ENCODE measurements at regions of chr14 and their contacts with region 1.

Region 1: GRCh38 chr14:93033983-93034670 is 81.6 kb downstream of the ITPK1 start:
- DNase-seq: no peak
- H3K4me3 ChIP-seq: peak overlapping the region in 1 of 3 experiments; percentile 54
- H3K4me3 Mint-ChIP-seq: no peak overlapping the region
- H3K27ac ChIP-seq: peak overlapping the region; percentile 67 to 85
- H3K27ac Mint-ChIP-seq: peak overlapping the region; percentile 16 to 95 (median 92)
- H3K4me1 ChIP-seq: peaks cover 57 to 58% of the 10 kb centered on the region in 2 donors
- H3K4me1 Mint-ChIP-seq: peaks cover 66% of the 10 kb centered on the region
- H3K27me3 ChIP-seq: no peaks in the 10 kb centered on the region
- H3K27me3 Mint-ChIP-seq: peaks cover 0 to 3% (median 0%) of the 10 kb centered on the region in 3 donors
- CTCF ChIP-seq: peak; percentile 52

Region 2: DNA sequence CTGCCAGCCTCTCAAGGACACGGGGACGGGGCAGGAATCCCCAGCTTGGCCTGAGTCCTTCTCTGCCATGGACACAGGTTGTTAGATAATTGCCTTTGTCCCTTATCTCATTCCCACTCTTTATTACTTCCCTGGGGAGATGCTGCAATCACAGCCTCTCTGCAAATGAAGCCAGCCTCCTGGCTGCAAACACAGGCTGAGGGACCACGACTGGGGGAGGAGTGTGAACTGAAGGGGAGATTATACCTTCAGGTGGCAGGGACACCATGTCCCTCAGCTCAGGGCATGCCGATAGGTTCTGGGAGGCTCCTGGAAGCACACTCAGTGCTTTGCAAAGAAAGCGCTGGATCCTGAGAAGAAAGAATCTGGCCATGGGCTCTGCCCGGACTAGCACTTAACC is 127.3 kb before region 1 on chr14:
- intact Hi-C with region 1: no loop called
- DNase-seq: no peak
- H3K4me3 ChIP-seq: no peak overlapping the region
- H3K4me3 Mint-ChIP-seq: no peak overlapping the region
- H3K27ac ChIP-seq: no peak overlapping the region
- H3K27ac Mint-ChIP-seq: no peak overlapping the region
- H3K4me1 ChIP-seq: no peaks in the 10 kb centered on the region
- H3K4me1 Mint-ChIP-seq: peaks cover 2% of the 10 kb centered on the region
- H3K27me3 ChIP-seq: peaks cover 0 to 12% of the 10 kb centered on the region in 2 donors
- H3K27me3 Mint-ChIP-seq: peaks cover 19 to 30% (median 25%) of the 10 kb centered on the region in 3 donors
- CTCF ChIP-seq: no peak

Region 3: GRCh38 chr14:92973261-92973797 is 60.8 kb before region 1 on chr14:
- intact Hi-C with region 1: loop called in 1 of 2 experiments (anchors 5 kb)
- DNase-seq: peak; percentile 18 to 22 (median 20)
- H3K4me3 ChIP-seq: no peak overlapping the region
- H3K4me3 Mint-ChIP-seq: no peak overlapping the region
- H3K27ac ChIP-seq: no peak overlapping the region
- H3K27ac Mint-ChIP-seq: peak overlapping the region in 1 of 7 donors; percentile 81
- H3K4me1 ChIP-seq: peaks cover under 1 to 1% of the 10 kb centered on the region in 2 donors
- H3K4me1 Mint-ChIP-seq: peaks cover 10% of the 10 kb centered on the region
- H3K27me3 ChIP-seq: no peaks in the 10 kb centered on the region
- H3K27me3 Mint-ChIP-seq: peaks cover 0 to 2% (median 0%) of the 10 kb centered on the region in 3 donors
- CTCF ChIP-seq: peak; percentile 76

Measured in CD14-positive monocyte (primary cell).